CD4-positive, alpha-beta memory T cell (primary cell): ENCODE measurements at regions of chr7 and their contacts with region 1.

Region 1: GRCh38 chr7:134710859-134711624 is 64.4 kb downstream of the BPGM start:
- DNase-seq: peak; percentile 70 to 92 (median 80)
- H3K4me3 ChIP-seq: no peak overlapping the region
- H3K4me3 Mint-ChIP-seq: peak overlapping the region in 7 of 8 donors; percentile 57 to 78 (median 66)
- H3K27ac ChIP-seq: peak overlapping the region; percentile 45
- H3K27ac Mint-ChIP-seq: peak overlapping the region; percentile 87 to 99 (median 96)
- H3K4me1 ChIP-seq: peaks cover 17% of the 10 kb centered on the region
- H3K4me1 Mint-ChIP-seq: peaks cover 10 to 22% (median 18%) of the 10 kb centered on the region in 4 donors
- H3K27me3 ChIP-seq: no peaks in the 10 kb centered on the region
- H3K27me3 Mint-ChIP-seq: no peaks in the 10 kb centered on the region

Region 2: DNA sequence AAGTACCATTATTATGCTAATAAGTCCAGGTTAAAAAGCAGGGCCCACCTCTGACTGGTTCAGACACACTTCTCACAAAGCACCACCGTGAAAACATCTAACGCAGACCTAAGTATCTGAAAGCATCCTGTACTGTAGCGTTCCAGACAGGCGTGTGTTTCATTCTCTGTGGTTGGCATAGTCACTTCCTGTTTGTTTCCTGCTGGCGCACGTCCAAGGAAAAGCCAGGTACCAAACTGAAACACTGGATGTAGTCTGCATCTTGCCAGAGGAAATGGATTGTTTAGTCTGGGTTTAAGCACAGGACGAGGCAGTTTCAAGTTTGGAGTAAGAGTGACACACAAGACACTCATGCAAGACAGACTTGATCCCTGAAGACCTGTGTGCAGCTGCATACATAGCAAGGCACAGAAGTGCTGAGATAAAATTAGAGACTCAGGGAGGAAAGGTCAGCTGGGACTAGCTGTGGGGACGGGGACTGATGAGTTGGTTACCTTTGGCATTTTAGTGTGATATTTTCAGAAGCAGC is 41.1 kb before region 1 on chr7:
- CTCF ChIA-PET with region 1: interaction called, 3 read pairs
- POLR2A ChIA-PET with region 1: interaction called, 5 read pairs
- intact Hi-C with region 1: loop called (anchors 2 kb)
- DNase-seq: peak; percentile 84 to 94 (median 85)
- H3K4me3 ChIP-seq: peak overlapping the region in 1 of 2 donors; percentile 4
- H3K4me3 Mint-ChIP-seq: peak overlapping the region; percentile 74 to 87 (median 78)
- H3K27ac ChIP-seq: peak overlapping the region; percentile 48
- H3K27ac Mint-ChIP-seq: peak overlapping the region; percentile 91 to 100 (median 98)
- H3K4me1 ChIP-seq: peaks cover 33% of the 10 kb centered on the region
- H3K4me1 Mint-ChIP-seq: peaks cover 26 to 46% (median 37%) of the 10 kb centered on the region in 4 donors
- H3K27me3 ChIP-seq: no peaks in the 10 kb centered on the region
- H3K27me3 Mint-ChIP-seq: no peaks in the 10 kb centered on the region

Region 3: DNA sequence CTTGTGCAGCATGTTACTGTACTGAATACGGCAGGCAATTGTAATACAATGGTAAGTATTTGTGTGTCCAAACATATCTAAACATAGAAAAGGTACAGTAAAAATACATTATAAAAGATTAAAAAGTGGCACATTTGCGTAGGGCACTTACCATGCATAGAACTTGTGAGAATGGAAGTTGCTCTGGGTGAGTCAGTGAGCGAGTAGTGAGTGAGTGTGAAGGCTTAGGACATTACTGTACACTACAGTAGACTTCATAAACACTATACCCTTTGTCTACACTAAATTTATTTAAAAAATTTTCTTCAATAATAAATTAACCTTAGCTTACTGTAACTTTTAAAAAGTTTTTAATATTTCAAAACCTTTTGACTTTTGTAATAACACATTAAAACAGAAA is 26.9 kb before region 1 on chr7:
- CTCF ChIA-PET with region 1: no interaction called
- POLR2A ChIA-PET with region 1: no interaction called
- intact Hi-C with region 1: no loop called
- DNase-seq: no peak
- H3K4me3 ChIP-seq: no peak overlapping the region
- H3K4me3 Mint-ChIP-seq: no peak overlapping the region
- H3K27ac ChIP-seq: no peak overlapping the region
- H3K27ac Mint-ChIP-seq: no peak overlapping the region
- H3K4me1 ChIP-seq: no peaks in the 10 kb centered on the region
- H3K4me1 Mint-ChIP-seq: no peaks in the 10 kb centered on the region
- H3K27me3 ChIP-seq: no peaks in the 10 kb centered on the region
- H3K27me3 Mint-ChIP-seq: peaks cover 0 to 1% of the 10 kb centered on the region in 2 donors